MCF 10A (cell line): ENCODE measurements at regions of chr1 and their contacts with region 1.

Region 1: GRCh38 chr1:52127181-52128180 is 14.4 kb upstream of the ZFYVE9 start:
- DNase-seq: peak; percentile 80
- H3K4me3 Mint-ChIP-seq: no peak overlapping the region
- H3K27ac Mint-ChIP-seq: no peak overlapping the region
- H3K4me1 Mint-ChIP-seq: peaks cover 7% of the 10 kb centered on the region
- H3K27me3 Mint-ChIP-seq: peaks cover 13% of the 10 kb centered on the region
- CTCF ChIP-seq: peak; percentile 58

Region 2: GRCh38 chr1:52080014-52080415 is 47.5 kb before region 1 on chr1:
- CTCF ChIA-PET with region 1: interaction called, 10 read pairs
- POLR2A ChIA-PET with region 1: no interaction called
- intact Hi-C with region 1: no loop called
- DNase-seq: no peak
- H3K4me3 Mint-ChIP-seq: no peak overlapping the region
- H3K27ac Mint-ChIP-seq: no peak overlapping the region
- H3K4me1 Mint-ChIP-seq: no peaks in the 10 kb centered on the region
- H3K27me3 Mint-ChIP-seq: no peaks in the 10 kb centered on the region
- CTCF ChIP-seq: no peak

Region 3: DNA sequence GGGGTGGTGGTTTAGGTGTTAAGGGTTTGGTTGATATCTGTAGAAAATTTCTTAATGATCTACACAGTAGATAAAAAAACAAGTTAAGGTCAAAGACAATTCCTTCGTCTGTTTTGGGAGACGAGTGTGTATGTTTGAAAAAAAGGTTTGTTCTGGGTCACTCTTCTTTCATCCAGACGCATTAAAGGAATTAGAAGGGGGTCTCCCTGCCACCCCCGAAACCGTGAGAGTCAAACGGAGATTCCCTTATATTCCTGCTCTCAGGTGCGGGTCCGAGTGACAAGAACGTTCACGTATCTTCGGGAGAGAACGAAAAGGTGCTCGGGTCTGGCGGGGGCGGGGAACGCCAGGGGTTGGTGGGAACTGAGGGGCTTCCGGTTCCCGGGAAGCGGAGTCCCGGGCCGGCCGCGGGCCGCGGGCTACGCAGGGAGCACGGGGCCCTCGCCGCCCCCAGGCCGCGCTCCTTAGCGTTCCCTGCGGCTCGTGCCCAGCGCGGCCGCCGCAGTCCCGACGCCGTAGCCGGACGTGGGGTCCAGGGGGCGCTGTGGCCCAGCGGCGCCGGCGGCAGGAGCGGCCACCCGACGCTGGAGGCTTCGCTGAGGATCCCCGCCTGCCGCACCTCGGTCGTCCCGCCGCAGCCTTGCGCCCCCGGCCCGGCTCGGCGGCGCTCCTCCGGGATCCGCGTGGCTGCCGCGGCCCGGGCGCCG is 14.2 kb after region 1 on chr1 and contains the start of gene ZFYVE9:
- CTCF ChIA-PET with region 1: interaction called, 5 read pairs
- POLR2A ChIA-PET with region 1: interaction called, 11 read pairs
- intact Hi-C with region 1: no loop called
- DNase-seq: peak; percentile 76
- H3K4me3 Mint-ChIP-seq: peak within 1 kb of the TSS; percentile 86
- H3K27ac Mint-ChIP-seq: peak within 1 kb of the TSS; percentile 95
- H3K4me1 Mint-ChIP-seq: peaks cover 29% of the 10 kb centered on the region
- H3K27me3 Mint-ChIP-seq: no peaks in the 10 kb centered on the region
- CTCF ChIP-seq: peak; percentile 78
- total RNA-seq, gene ZFYVE9: 21.9 and 23.9 TPM in 2 replicates

Region 4: GRCh38 chr1:52296345-52296744 is 168.9 kb after region 1 on chr1:
- CTCF ChIA-PET with region 1: interaction called, 98 read pairs
- POLR2A ChIA-PET with region 1: interaction called, 4 read pairs
- intact Hi-C with region 1: loop called (anchors 1 kb)
- DNase-seq: peak; percentile 70
- H3K4me3 Mint-ChIP-seq: no peak overlapping the region
- H3K27ac Mint-ChIP-seq: no peak overlapping the region
- H3K4me1 Mint-ChIP-seq: no peaks in the 10 kb centered on the region
- H3K27me3 Mint-ChIP-seq: no peaks in the 10 kb centered on the region
- CTCF ChIP-seq: peak; percentile 62

Region 5: DNA sequence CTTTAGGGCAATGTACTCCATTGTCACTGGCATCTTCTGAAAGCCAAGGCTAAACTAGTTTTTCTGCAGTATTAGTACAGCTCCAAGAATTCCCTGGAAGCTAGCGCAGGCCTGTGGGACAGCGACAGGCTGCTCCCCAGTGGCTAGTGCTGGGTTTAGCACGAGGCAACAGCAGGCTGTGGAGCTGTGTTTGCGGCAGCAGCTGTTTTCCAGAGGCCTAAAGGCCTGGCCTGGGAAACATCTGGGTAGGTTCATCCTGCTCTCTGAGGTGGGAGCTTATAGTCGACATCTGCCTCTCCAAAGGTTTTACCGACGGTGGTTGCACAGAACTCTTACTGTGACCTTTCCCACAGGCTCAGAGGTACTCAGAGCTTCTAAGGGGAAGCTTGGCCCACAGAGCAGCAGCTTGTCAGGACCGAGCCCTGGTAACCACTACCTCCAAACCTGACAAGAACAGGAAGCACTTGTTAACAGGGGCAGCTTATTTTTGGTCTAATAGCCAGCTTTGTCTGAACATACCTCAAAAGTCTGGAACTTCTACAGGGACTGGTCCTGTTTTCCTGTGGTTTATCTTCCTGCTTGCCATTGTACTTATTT is 221.3 kb after region 1 on chr1:
- CTCF ChIA-PET with region 1: no interaction called
- POLR2A ChIA-PET with region 1: no interaction called
- intact Hi-C with region 1: loop called (anchors 1 kb)
- DNase-seq: peak; percentile 13
- H3K4me3 Mint-ChIP-seq: no peak overlapping the region
- H3K27ac Mint-ChIP-seq: no peak overlapping the region
- H3K4me1 Mint-ChIP-seq: no peaks in the 10 kb centered on the region
- H3K27me3 Mint-ChIP-seq: no peaks in the 10 kb centered on the region
- CTCF ChIP-seq: no peak

Region 6: GRCh38 chr1:52404116-52404986 is 276.9 kb after region 1 on chr1 and contains the starts of genes ORC1 and PRPF38A:
- CTCF ChIA-PET with region 1: interaction called, 3 read pairs
- POLR2A ChIA-PET with region 1: interaction called, 3 read pairs
- intact Hi-C with region 1: loop called (anchors 1 kb)
- DNase-seq: peak; percentile 98
- H3K4me3 Mint-ChIP-seq: peak within 1 kb of the TSS; percentile 100
- H3K27ac Mint-ChIP-seq: peak within 1 kb of the TSS; percentile 97
- H3K4me1 Mint-ChIP-seq: peaks cover 7% of the 10 kb centered on the region
- H3K27me3 Mint-ChIP-seq: no peaks in the 10 kb centered on the region
- CTCF ChIP-seq: peak; percentile 36
- total RNA-seq, gene ORC1: 1.8 and 2.7 TPM in 2 replicates
- total RNA-seq, gene PRPF38A: 63.8 TPM in 2 replicates

Region 7: GRCh38 chr1:52662645-52663313 is 535.3 kb after region 1 on chr1:
- CTCF ChIA-PET with region 1: no interaction called
- POLR2A ChIA-PET with region 1: no interaction called
- intact Hi-C with region 1: loop called (anchors 5 kb)
- DNase-seq: peak; percentile 98
- H3K4me3 Mint-ChIP-seq: peak overlapping the region; percentile 64
- H3K27ac Mint-ChIP-seq: peak overlapping the region; percentile 68
- H3K4me1 Mint-ChIP-seq: peaks cover 65% of the 10 kb centered on the region
- H3K27me3 Mint-ChIP-seq: no peaks in the 10 kb centered on the region
- CTCF ChIP-seq: no peak